Activated CD4-positive, alpha-beta memory T cell treated with anti-CD3 and anti-CD28 coated beads, Interleukin-2, amount 10 ng/mL, durations not matched to agents 7 days and 5 days (primary cell): ENCODE measurements at regions of chr10 and their contacts with region 1.

Region 1: GRCh38 chr10:3785257-3785850 is 345 bp upstream of the KLF6 start:
- DNase-seq: peak; percentile 100
- H3K4me3 Mint-ChIP-seq: peak overlapping the region; percentile 97
- H3K27ac Mint-ChIP-seq: peak overlapping the region; percentile 98
- H3K4me1 Mint-ChIP-seq: peaks cover 25% of the 10 kb centered on the region
- H3K27me3 Mint-ChIP-seq: peaks cover 3% of the 10 kb centered on the region

Region 2: GRCh38 chr10:3197348-3198003 is 587.9 kb before region 1 on chr10:
- CTCF ChIA-PET with region 1: no interaction called
- POLR2A ChIA-PET with region 1: interaction called, 10 read pairs
- DNase-seq: peak; percentile 90
- H3K4me3 Mint-ChIP-seq: peak overlapping the region; percentile 15
- H3K27ac Mint-ChIP-seq: no peak overlapping the region
- H3K4me1 Mint-ChIP-seq: peaks cover 23% of the 10 kb centered on the region
- H3K27me3 Mint-ChIP-seq: peaks cover 85% of the 10 kb centered on the region

Region 3: GRCh38 chr10:3566627-3567026 is 218.7 kb before region 1 on chr10:
- CTCF ChIA-PET with region 1: no interaction called
- POLR2A ChIA-PET with region 1: no interaction called
- DNase-seq: no peak
- H3K4me3 Mint-ChIP-seq: no peak overlapping the region
- H3K27ac Mint-ChIP-seq: no peak overlapping the region
- H3K4me1 Mint-ChIP-seq: peaks cover 25% of the 10 kb centered on the region
- H3K27me3 Mint-ChIP-seq: no peaks in the 10 kb centered on the region

Region 4: DNA sequence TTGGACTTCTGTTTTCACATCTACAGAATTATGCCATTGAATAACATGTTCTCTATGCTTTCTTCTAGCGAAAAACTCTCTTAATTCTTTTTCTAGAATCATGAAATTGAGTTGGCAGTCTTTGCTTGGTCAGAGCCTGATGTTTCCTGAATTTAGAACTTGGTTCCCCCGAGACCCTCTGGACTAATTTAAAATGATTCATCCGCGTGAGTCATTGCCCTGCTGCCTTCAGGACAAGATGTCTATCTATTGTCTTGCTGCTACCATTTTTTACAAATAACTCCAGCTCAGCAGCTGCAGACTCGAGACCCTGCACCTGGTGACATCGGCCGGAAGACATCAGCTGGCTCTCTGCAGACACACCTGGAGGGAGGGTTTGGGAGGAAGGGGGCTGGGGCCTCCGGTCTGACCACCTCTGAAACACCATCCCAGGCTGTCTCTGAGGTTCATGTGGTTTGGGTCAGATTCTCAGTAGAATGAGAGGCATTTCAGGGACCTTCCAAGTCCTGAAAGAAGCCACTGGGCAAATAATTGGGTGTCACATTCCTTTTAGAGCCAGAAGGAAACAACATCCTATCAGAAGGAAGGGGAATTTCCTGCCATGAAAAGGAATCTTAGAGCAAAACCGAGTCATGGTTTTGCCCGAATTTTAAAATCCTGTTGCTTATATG is 20.6 kb after region 1 on chr10:
- CTCF ChIA-PET with region 1: interaction called, 25 read pairs
- POLR2A ChIA-PET with region 1: interaction called, 1,053 read pairs
- DNase-seq: peak; percentile 69
- H3K4me3 Mint-ChIP-seq: peak overlapping the region; percentile 67
- H3K27ac Mint-ChIP-seq: no peak overlapping the region
- H3K4me1 Mint-ChIP-seq: peaks cover 63% of the 10 kb centered on the region
- H3K27me3 Mint-ChIP-seq: no peaks in the 10 kb centered on the region

Region 5: DNA sequence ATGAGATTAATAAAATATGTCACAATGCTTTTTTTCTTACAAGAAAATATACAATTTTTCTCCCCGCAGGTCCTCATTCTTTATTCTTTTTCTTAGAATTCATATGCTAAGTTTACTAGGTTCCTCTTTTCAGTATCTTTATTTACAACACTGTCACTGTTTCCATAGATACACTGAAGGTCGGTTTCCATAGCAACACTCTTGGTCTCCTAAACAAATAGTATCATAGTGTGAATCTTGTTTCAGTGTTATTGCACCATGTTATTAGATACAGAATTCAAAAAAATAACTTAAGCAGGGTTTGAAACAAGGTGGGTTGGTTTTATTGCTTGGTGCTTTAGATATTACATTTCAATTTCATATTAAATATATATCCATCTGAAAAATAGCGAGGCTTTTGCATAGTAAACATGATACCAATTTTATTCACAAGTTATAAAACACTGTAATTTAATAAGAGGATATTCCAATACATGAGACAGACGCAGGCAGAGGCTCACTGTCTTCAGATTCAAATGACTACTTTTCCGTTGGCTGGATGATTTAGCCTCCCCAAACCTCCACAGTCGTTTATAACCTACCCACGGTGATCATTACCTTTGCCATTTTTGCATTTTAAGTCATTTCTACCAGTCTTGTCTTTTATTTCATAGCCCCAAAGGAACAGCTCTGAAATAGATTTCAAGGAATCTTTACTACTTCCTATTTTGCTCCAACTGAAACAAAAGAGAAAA is 88.5 kb after region 1 on chr10:
- CTCF ChIA-PET with region 1: no interaction called
- POLR2A ChIA-PET with region 1: interaction called, 71 read pairs
- DNase-seq: no peak
- H3K4me3 Mint-ChIP-seq: no peak overlapping the region
- H3K27ac Mint-ChIP-seq: peak overlapping the region; percentile 33
- H3K4me1 Mint-ChIP-seq: peaks cover 61% of the 10 kb centered on the region
- H3K27me3 Mint-ChIP-seq: no peaks in the 10 kb centered on the region

Region 6: GRCh38 chr10:3948843-3949242 is 163.5 kb after region 1 on chr10:
- CTCF ChIA-PET with region 1: interaction called, 3 read pairs
- POLR2A ChIA-PET with region 1: interaction called, 146 read pairs
- DNase-seq: peak; percentile 85
- H3K4me3 Mint-ChIP-seq: peak overlapping the region; percentile 70
- H3K27ac Mint-ChIP-seq: peak overlapping the region; percentile 90
- H3K4me1 Mint-ChIP-seq: peaks cover 73% of the 10 kb centered on the region
- H3K27me3 Mint-ChIP-seq: no peaks in the 10 kb centered on the region

Region 7: DNA sequence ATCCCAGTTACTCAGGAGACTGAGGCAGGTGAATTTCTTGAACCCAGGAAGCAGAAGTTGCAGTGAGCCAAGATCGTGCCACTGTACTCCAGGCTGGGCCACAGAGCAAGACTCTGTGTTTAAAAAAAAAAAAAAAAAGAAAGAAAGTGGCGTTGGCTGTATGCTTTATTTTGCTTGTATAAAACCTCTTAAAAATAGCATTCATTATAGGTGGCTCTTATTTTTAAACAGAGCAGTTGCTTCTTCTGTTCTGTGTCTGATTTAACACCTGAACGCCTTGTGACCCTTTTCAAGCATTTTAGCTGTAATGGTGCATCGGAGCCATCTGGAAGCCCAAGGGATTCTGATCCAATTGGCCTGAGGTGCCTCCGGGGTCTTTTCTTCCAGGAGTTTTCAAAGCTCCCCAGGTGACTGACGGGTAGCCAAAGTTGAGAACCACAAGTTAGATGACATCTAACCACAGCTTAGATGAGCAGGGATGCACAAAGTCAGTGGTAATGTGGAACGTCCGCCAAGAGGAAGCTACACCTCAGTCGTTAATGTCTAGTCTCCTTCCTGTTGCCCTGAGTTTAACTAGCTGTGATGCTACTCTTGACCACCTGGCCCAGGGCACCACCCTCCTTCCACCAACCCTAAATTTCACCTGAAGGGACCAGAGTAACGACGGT is 274.3 kb after region 1 on chr10:
- CTCF ChIA-PET with region 1: no interaction called
- POLR2A ChIA-PET with region 1: interaction called, 15 read pairs
- DNase-seq: peak; percentile 49
- H3K4me3 Mint-ChIP-seq: no peak overlapping the region
- H3K27ac Mint-ChIP-seq: peak overlapping the region; percentile 70
- H3K4me1 Mint-ChIP-seq: peaks cover 29% of the 10 kb centered on the region
- H3K27me3 Mint-ChIP-seq: no peaks in the 10 kb centered on the region